ENCODE measurements at regions of chr13 and their contacts with region 1.

Region 1: DNA sequence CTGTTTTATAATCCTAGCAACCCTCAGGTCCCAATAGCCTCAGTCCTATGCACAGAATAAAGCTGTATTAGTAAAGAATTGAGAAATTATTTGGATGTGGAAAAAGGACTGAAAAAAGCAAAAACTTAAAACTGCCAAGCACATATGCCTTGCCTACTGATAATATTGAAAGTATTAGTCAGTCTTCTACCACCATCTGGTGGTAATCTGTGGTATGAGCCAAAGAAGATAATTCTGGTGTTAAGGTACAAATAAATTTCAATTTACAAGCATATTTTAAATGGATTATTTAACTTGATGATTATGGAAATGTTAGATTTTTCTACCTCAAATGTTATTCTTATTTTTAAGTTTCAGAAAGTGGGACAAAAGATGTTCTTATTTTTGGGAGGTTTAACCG is 460.3 kb upstream of the KLHL1 start:
- DNase-seq: peak; percentile 19
- ATAC-seq: no peak
- H3K4me3 ChIP-seq: no peak overlapping the region
- H3K27ac ChIP-seq: no peak overlapping the region
- H3K4me1 ChIP-seq: no peaks in the 10 kb centered on the region
- H3K27me3 ChIP-seq: no peaks in the 10 kb centered on the region
- CTCF ChIP-seq: peak; percentile 35 to 65 (median 41); a peak in 5 of 6 replicates
- POLR2A ChIP-seq: no peak
- RAD21 ChIP-seq: peak; percentile 64

Region 2: DNA sequence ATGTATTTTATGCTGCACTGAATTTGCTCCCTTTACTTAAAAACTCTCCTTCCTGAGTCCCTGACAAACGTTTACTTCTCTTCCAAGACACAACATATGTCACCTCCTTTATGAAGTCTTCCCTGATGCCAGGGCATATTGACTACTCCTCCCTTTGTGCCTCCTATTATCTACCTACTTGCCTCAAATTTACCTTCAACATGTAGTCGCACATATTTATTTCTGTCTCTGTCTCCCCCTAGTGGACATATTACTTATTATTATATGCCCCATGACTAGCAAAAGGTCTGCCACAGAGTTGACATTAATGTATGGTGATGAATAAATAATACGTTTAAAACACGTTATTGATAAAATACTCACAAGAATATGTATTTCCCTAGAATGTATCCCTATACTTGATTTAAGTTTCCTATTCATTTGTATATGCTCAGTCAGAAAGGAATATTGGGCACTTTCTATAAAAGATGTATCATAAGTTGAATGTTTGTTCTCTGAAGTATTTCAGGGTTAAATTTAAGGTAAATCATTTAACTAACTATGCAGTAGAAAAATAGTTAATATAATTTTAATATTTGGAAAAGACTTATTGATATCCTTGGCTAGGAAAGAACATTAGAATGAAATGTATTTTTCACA is 711.3 kb before region 1 on chr13:
- CTCF ChIA-PET with region 1: no interaction called
- POLR2A ChIA-PET with region 1: no interaction called
- RAD21 ChIA-PET with region 1: no interaction called
- intact Hi-C with region 1: loop called (anchors 5 kb)
- DNase-seq: peak; percentile 45
- ATAC-seq: peak; percentile 87
- H3K4me3 ChIP-seq: no peak overlapping the region
- H3K27ac ChIP-seq: no peak overlapping the region
- H3K4me1 ChIP-seq: no peaks in the 10 kb centered on the region
- H3K27me3 ChIP-seq: no peaks in the 10 kb centered on the region
- CTCF ChIP-seq: peak; percentile 30 to 81 (median 44); a peak in 4 of 6 replicates
- POLR2A ChIP-seq: no peak
- RAD21 ChIP-seq: peak; percentile 64

Region 3: DNA sequence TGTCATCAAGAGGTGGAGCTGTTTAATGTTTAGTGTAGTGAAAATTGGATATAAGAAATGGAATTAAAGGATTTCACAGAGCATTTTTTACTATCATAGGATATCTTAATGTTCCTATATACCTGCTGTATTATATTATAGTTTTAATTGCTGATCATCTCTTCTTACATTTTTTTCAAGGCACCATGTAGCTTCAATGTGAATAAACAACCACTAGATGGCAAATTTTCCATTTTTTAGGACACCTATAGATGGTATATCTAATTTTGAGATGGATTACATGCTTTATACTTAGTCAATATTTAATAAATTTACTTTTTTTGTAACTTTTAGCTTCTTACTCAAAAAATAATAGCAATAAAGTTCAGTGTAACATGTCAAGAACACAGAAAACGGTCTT is 469.9 kb before region 1 on chr13:
- CTCF ChIA-PET with region 1: no interaction called
- POLR2A ChIA-PET with region 1: no interaction called
- RAD21 ChIA-PET with region 1: no interaction called
- intact Hi-C with region 1: loop called (anchors 5 kb)
- DNase-seq: peak; percentile 2
- ATAC-seq: no peak
- H3K4me3 ChIP-seq: no peak overlapping the region
- H3K27ac ChIP-seq: no peak overlapping the region
- H3K4me1 ChIP-seq: no peaks in the 10 kb centered on the region
- H3K27me3 ChIP-seq: no peaks in the 10 kb centered on the region
- CTCF ChIP-seq: peak in 2 of 3 experiments; percentile 33 to 42; a peak in 3 of 6 replicates
- POLR2A ChIP-seq: no peak
- RAD21 ChIP-seq: no peak; the same call in 1 of the 2 replicates

Region 4: DNA sequence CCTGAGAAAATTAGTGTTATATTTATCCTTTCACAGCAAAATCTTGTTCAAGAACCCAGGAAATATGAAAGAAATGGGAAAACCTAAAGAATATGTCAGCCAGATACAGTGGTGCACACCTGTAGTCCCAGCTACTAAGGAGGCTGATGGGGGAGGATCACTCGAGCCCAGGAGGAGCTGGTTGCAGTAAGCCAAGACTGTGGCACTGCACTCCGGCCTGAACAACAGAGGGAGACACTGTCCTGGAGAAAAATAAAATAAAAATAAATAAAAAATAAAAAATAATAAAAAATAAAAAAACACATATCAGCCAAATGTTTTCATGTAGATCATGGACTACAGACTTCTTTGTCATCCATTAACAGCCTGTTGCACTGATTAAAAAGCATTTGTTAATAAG is 215.5 kb before region 1 on chr13:
- CTCF ChIA-PET with region 1: interaction called, 3 read pairs
- POLR2A ChIA-PET with region 1: no interaction called
- RAD21 ChIA-PET with region 1: no interaction called
- intact Hi-C with region 1: loop called (anchors 10 kb)
- DNase-seq: no peak
- ATAC-seq: no peak
- H3K4me3 ChIP-seq: no peak overlapping the region
- H3K27ac ChIP-seq: no peak overlapping the region
- H3K4me1 ChIP-seq: no peaks in the 10 kb centered on the region
- H3K27me3 ChIP-seq: no peaks in the 10 kb centered on the region
- CTCF ChIP-seq: no peak
- POLR2A ChIP-seq: no peak
- RAD21 ChIP-seq: no peak

Region 5: GRCh38 chr13:70541451-70541850 is 27.1 kb before region 1 on chr13:
- CTCF ChIA-PET with region 1: no interaction called
- POLR2A ChIA-PET with region 1: no interaction called
- RAD21 ChIA-PET with region 1: no interaction called
- intact Hi-C with region 1: no loop called
- DNase-seq: no peak
- ATAC-seq: no peak
- H3K4me3 ChIP-seq: no peak overlapping the region
- H3K27ac ChIP-seq: no peak overlapping the region
- H3K4me1 ChIP-seq: no peaks in the 10 kb centered on the region
- H3K27me3 ChIP-seq: no peaks in the 10 kb centered on the region
- CTCF ChIP-seq: no peak
- POLR2A ChIP-seq: no peak
- RAD21 ChIP-seq: no peak

Measured in HCT116 (cell line).